ENCODE measurements at regions of chr2 and their contacts with region 1.

Region 1: DNA sequence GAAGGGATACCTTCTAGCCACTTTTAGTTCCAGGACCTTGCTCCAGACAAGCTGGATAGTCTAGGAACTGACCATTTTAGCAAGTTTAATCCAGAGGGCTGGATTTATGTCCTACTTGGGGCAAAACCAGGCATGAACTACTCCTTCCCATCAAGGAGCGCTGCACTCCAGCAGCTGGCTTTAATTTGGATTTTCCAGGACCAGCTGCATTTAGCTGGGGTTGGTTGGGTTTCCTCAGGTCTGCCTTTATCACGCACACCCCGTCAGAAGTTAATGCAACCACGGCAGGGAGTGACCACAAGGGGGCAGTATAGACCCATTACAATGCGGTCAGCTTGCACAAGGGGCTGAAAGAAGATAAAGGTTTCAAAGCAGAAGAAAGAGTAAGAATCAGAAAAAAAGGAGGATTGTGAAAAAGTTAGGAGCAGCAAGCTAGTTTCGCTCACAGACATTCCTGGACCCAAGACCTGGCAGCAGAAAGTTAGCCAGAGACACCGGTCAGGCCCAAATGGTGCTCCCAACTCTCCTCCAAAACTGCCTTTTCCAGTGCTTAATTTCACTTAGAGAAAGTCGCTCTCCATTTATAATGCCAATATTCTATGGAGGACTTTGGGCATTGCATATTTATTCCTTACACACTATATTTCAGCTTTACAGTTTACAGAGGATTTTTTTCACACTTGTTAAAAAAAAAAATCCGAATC is 40.1 kb downstream of the SLC4A1AP start:
- DNase-seq: peak; percentile 90 to 93
- H3K4me3 ChIP-seq: no peak overlapping the region
- H3K4me3 Mint-ChIP-seq: peak overlapping the region; percentile 34
- H3K27ac Mint-ChIP-seq: peak overlapping the region; percentile 20
- H3K4me1 ChIP-seq: peaks cover 65% of the 10 kb centered on the region
- H3K4me1 Mint-ChIP-seq: peaks cover 48% of the 10 kb centered on the region
- H3K27me3 ChIP-seq: no peaks in the 10 kb centered on the region
- H3K27me3 Mint-ChIP-seq: no peaks in the 10 kb centered on the region
- CTCF ChIP-seq: peak; percentile 88 to 91

Region 2: DNA sequence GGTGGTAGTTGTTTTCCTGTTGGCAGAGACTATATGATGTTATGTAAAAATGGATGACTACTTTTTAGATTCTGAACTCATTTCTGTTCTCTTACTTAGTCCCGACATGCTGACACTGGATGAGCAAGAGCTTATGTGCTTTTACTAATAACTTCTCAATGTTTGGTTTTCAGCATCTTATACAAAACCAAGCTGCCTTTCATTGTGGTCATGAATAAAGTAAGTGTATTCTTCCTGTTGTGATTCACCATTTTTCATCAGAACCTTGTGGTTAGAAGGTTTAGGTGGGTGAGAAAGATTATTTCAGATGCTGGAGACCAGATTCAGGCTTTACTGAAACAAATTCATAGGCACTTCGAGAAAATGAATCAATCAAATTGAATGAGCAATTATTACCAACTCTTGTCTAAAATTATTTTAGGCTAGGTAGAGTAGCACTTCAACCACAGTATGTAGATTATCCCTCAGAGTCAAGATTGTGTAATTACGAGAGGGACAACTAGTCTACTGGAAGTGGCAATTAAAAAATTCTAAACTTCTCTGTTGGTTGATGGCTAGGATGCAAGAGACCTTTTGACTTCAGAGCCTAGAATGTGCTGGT is 65.7 kb before region 1 on chr2:
- CTCF ChIA-PET with region 1: no interaction called
- POLR2A ChIA-PET with region 1: no interaction called
- intact Hi-C with region 1: no loop called
- DNase-seq: no peak
- H3K4me3 ChIP-seq: no peak overlapping the region
- H3K4me3 Mint-ChIP-seq: no peak overlapping the region
- H3K27ac Mint-ChIP-seq: no peak overlapping the region
- H3K4me1 ChIP-seq: peaks cover 12% of the 10 kb centered on the region
- H3K4me1 Mint-ChIP-seq: peaks cover 8% of the 10 kb centered on the region
- H3K27me3 ChIP-seq: no peaks in the 10 kb centered on the region
- H3K27me3 Mint-ChIP-seq: no peaks in the 10 kb centered on the region
- CTCF ChIP-seq: no peak

Region 3: GRCh38 chr2:27683390-27684071 is 20.3 kb before region 1 on chr2:
- CTCF ChIA-PET with region 1: interaction called, 29 read pairs
- POLR2A ChIA-PET with region 1: no interaction called
- intact Hi-C with region 1: loop called (anchors 1 kb)
- DNase-seq: peak; percentile 82 to 93
- H3K4me3 ChIP-seq: no peak overlapping the region
- H3K4me3 Mint-ChIP-seq: no peak overlapping the region
- H3K27ac Mint-ChIP-seq: peak overlapping the region; percentile 81
- H3K4me1 ChIP-seq: peaks cover 28% of the 10 kb centered on the region
- H3K4me1 Mint-ChIP-seq: peaks cover 14% of the 10 kb centered on the region
- H3K27me3 ChIP-seq: no peaks in the 10 kb centered on the region
- H3K27me3 Mint-ChIP-seq: no peaks in the 10 kb centered on the region
- CTCF ChIP-seq: peak; percentile 99 to 100

Region 4: DNA sequence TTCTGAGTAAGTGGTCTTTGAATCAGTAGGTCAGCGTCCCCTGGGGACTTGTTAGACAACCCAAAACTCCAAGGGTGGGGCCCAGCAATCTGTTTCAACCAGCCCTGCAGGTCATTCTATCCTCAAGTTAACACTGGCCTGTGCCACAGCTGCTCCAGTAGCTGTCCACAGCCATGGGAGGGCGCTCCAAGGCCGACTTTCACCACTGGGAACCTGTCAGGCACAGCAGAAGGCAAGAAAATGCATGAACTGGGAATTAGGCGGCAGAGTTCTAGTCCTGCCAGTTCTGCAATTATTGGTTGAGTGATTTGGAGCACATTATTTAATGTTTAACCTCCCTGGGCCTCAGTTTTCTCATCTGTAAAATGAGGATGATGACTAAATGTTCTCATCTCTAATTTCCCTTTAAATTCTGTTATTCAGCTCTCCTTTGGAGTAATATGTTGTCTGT is 50.4 kb after region 1 on chr2:
- CTCF ChIA-PET with region 1: interaction called, 19 read pairs
- POLR2A ChIA-PET with region 1: interaction called, 11 read pairs
- intact Hi-C with region 1: loop called (anchors 1 kb)
- DNase-seq: peak; percentile 91 to 92
- H3K4me3 ChIP-seq: peak overlapping the region; percentile 56
- H3K4me3 Mint-ChIP-seq: peak overlapping the region; percentile 89
- H3K27ac Mint-ChIP-seq: peak overlapping the region; percentile 99
- H3K4me1 ChIP-seq: peaks cover 33% of the 10 kb centered on the region
- H3K4me1 Mint-ChIP-seq: peaks cover 21% of the 10 kb centered on the region
- H3K27me3 ChIP-seq: no peaks in the 10 kb centered on the region
- H3K27me3 Mint-ChIP-seq: no peaks in the 10 kb centered on the region
- CTCF ChIP-seq: peak; percentile 77 to 83

Region 5: DNA sequence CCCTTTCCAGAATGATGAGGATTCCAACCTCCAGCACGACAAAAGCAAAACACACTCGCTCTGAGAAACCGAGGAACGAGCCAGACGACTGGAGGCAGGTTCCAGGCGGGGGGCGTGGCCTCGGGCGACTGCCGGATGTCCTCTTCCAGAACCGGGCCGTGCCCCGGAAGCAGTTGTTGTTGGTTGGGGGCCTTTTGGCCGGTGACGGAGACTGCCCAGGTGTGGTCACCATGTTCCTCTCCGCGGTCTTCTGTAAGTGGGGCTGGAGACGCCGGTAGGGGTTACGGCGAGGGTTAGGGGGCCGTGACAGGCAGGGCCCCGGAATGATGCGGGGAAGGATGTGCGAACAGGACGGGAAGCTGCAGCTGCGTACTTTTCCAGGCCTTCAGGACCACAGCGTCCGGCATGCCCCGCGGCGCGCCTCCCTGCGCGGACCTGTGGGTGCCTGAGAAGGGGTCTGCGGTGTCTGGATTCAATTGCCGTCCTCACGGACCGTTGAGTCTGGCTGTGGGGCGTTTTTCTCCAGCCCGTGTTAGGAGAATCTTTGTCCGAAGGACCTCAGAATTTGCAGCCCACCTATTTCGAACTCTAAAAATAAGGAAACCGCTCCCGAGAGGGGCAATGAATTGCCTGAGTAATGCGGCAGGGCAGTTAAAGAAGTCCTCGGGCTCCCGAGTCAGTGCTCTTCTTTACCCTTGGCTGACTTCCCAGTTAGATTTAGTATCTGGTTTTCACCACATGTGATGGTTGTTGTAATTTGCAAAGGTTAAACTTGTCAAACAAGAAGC is 68.0 kb after region 1 on chr2 and contains the start of gene MRPL33:
- CTCF ChIA-PET with region 1: interaction called, 3 read pairs
- POLR2A ChIA-PET with region 1: interaction called, 3 read pairs
- intact Hi-C with region 1: loop called (anchors 1 kb)
- DNase-seq: peak; percentile 96 to 98
- H3K4me3 ChIP-seq: peak within 1 kb of the TSS; percentile 72
- H3K4me3 Mint-ChIP-seq: peak within 1 kb of the TSS; percentile 83
- H3K27ac Mint-ChIP-seq: peak within 1 kb of the TSS; percentile 81
- H3K4me1 ChIP-seq: peaks cover 17% of the 10 kb centered on the region
- H3K4me1 Mint-ChIP-seq: peaks cover 14% of the 10 kb centered on the region
- H3K27me3 ChIP-seq: no peaks in the 10 kb centered on the region
- H3K27me3 Mint-ChIP-seq: no peaks in the 10 kb centered on the region
- CTCF ChIP-seq: no peak
- total RNA-seq, gene MRPL33: 84.9 and 89.5 TPM in 2 replicates

Region 6: GRCh38 chr2:27907547-27907946 is 203.8 kb after region 1 on chr2:
- CTCF ChIA-PET with region 1: no interaction called
- POLR2A ChIA-PET with region 1: no interaction called
- intact Hi-C with region 1: no loop called
- DNase-seq: no peak
- H3K4me3 ChIP-seq: no peak overlapping the region
- H3K4me3 Mint-ChIP-seq: no peak overlapping the region
- H3K27ac Mint-ChIP-seq: no peak overlapping the region
- H3K4me1 ChIP-seq: no peaks in the 10 kb centered on the region
- H3K4me1 Mint-ChIP-seq: no peaks in the 10 kb centered on the region
- H3K27me3 ChIP-seq: no peaks in the 10 kb centered on the region
- H3K27me3 Mint-ChIP-seq: no peaks in the 10 kb centered on the region
- CTCF ChIP-seq: no peak

Region 7: DNA sequence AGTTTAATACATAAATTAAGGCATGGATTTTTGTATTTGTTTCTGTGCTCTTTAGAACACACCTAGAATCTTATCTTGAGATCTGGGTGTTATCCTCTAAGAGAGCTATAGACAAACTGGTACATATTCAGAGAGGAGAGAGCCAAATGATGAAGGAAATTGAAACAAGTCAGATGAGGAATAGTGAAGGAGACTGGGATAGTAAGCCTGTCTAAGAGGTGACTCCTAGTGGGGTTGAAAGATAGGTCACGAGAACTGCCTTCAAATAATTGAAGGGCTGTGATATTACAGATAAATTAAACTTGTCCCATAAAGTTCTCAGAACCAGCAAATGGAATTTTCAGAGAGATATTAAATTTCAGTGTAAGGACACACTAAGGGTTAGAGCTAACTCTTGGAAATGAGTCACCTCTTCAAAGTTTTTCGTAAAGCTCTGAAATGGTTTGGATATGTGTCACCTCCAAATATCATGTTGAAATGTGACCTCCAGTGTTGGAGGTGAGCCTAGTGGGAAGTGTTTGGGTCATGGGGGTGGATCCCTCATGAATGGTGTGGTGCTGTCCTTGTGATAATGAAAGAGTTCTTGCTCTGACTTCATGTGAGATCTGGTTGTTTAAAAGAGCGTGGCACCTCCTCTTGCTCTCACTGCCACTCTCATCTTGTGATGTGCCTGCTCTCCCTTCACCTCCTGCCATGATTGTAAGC is 274.0 kb after region 1 on chr2:
- CTCF ChIA-PET with region 1: no interaction called
- POLR2A ChIA-PET with region 1: no interaction called
- intact Hi-C with region 1: loop called (anchors 10 kb)
- DNase-seq: no peak
- H3K4me3 ChIP-seq: no peak overlapping the region
- H3K4me3 Mint-ChIP-seq: no peak overlapping the region
- H3K27ac Mint-ChIP-seq: no peak overlapping the region
- H3K4me1 ChIP-seq: no peaks in the 10 kb centered on the region
- H3K4me1 Mint-ChIP-seq: no peaks in the 10 kb centered on the region
- H3K27me3 ChIP-seq: no peaks in the 10 kb centered on the region
- H3K27me3 Mint-ChIP-seq: no peaks in the 10 kb centered on the region
- CTCF ChIP-seq: no peak

Region 8: GRCh38 chr2:28276076-28276618 is 572.4 kb after region 1 on chr2:
- CTCF ChIA-PET with region 1: no interaction called
- POLR2A ChIA-PET with region 1: no interaction called
- intact Hi-C with region 1: loop called (anchors 2 kb)
- DNase-seq: no peak
- H3K4me3 ChIP-seq: no peak overlapping the region
- H3K4me3 Mint-ChIP-seq: no peak overlapping the region
- H3K27ac Mint-ChIP-seq: peak overlapping the region; percentile 93
- H3K4me1 ChIP-seq: peaks cover 68% of the 10 kb centered on the region
- H3K4me1 Mint-ChIP-seq: peaks cover 65% of the 10 kb centered on the region
- H3K27me3 ChIP-seq: no peaks in the 10 kb centered on the region
- H3K27me3 Mint-ChIP-seq: no peaks in the 10 kb centered on the region
- CTCF ChIP-seq: no peak

Region 9: DNA sequence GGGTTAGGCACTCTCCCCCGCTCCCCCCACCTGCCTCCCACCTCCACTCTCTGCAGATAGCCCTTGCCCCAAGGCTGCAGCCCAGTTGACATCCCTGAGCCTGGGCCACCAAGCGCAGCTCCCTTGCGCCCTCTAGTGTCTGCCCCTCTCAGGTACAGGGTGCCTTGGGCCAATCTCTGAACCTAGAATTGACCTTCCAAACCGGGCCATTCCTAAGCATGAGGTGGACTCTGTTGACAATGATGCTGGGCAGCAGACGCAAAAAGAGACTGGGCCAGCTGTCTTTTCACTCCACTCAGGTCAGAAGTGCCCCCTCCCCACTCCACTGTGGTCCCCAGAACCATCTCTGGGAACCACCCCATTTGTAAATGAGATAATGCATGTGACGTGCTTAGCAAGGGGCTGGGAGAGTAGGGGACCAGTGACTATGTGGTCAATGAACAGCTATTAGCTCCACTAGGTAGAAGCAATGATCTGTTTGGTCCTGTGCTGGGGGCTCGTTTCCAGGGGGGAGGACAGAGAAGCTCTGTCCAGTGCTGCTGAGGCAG is 748.8 kb after region 1 on chr2:
- CTCF ChIA-PET with region 1: no interaction called
- POLR2A ChIA-PET with region 1: no interaction called
- intact Hi-C with region 1: loop called (anchors 1 kb)
- DNase-seq: peak; percentile 72 to 84
- H3K4me3 ChIP-seq: no peak overlapping the region
- H3K4me3 Mint-ChIP-seq: no peak overlapping the region
- H3K27ac Mint-ChIP-seq: no peak overlapping the region
- H3K4me1 ChIP-seq: 0 out of 2 replicates have a peak, but pooled peaks cover 4% of the 10 kb centered on the region
- H3K4me1 Mint-ChIP-seq: peaks cover 13% of the 10 kb centered on the region
- H3K27me3 ChIP-seq: no peaks in the 10 kb centered on the region
- H3K27me3 Mint-ChIP-seq: no peaks in the 10 kb centered on the region
- CTCF ChIP-seq: peak; percentile 90 to 94